ENCODE measurements at regions of chr4 and their contacts with region 1.

Region 1: DNA sequence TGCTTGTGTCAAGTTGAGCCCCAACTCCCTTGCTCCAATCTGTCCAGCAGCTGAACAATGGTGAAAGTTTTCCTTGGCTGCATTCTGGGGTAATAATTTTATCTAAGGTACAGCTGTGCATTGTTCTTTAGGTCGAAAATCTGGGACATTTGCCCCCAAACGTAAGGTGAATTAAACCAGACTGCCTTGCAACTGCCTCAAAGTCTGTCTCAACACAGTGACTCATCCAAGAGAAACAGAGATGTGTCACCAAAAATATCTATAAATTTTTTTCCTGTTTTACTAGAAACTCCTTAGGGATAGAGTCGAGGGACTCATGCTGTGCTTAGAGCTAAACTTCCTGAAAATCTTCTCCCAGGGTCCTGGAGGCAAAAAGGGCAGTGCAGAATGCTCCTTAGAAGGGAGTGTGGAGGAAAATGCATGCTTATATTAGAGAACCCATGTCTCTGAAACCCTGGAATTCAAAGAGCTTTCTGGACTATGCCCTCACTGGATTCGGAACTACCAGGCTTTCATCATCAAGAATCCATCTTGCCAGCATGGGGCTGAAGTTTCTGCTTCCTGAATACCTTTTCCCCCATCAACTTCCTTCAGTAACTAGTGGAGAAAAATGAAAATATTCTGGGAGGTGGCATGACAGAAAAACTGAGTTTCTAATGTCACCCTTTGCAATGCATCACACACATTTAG is 115.7 kb downstream of the PALLD start:
- DNase-seq: peak; percentile 55
- H3K4me3 ChIP-seq: no peak overlapping the region
- H3K27ac ChIP-seq: peak overlapping the region; percentile 27
- H3K4me1 ChIP-seq: peaks cover 75% of the 10 kb centered on the region
- H3K27me3 ChIP-seq: no peaks in the 10 kb centered on the region
- CTCF ChIP-seq: no peak

Region 2: GRCh38 chr4:168631241-168632162 is 18.9 kb after region 1 on chr4:
- CTCF ChIA-PET with region 1: no interaction called
- POLR2A ChIA-PET with region 1: no interaction called
- intact Hi-C with region 1: loop called (anchors 2 kb)
- DNase-seq: peak; percentile 87
- H3K4me3 ChIP-seq: peak overlapping the region; percentile 68
- H3K27ac ChIP-seq: peak overlapping the region; percentile 58
- H3K4me1 ChIP-seq: peaks cover 51% of the 10 kb centered on the region
- H3K27me3 ChIP-seq: no peaks in the 10 kb centered on the region
- CTCF ChIP-seq: peak; percentile 56

Measured in A673 (cell line).